Ascending aorta (tissue), 2 donors: ENCODE measurements at regions of chr5 and their contacts with region 1.

Region 1: DNA sequence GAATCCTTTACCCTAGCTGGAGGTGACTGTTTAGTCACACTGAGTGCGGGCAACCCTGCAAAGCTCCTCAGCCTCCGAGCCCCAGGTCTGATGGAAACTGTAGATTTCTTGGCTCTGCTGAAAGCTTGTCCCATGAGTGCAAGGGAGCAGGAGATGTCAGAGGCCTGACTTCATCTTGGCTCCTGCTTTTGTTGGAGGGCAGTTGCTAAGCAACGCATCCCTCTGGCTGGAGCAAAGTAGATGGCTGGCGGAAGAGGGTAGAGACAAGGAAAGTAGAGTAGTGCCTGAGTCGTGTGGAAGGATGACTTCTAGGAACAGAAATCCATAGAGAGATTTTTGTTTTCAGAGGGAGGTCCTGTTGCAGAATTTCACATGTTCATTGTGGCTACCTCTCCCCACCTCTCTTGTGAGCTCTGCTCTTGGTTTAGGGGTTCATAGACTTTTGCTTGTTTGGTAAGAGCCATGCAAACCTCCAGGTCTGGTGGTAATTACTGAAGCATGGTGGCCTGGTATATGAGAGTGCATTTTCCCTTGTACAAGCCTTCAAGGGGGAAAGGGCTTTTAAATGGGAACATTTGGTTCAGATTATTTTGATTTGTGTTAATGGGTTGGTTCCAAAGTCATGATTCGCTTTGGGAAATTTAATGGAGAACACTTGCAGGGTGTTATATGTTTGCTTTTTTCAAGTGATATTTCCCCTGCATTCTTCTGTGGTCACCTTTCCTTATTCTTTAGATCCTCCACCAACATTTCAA is 71.5 kb downstream of the ARHGAP26 start:
- DNase-seq: peak; percentile 70 to 94
- H3K4me3 ChIP-seq: no peak overlapping the region
- H3K27ac ChIP-seq: peak overlapping the region; percentile 69 to 81
- H3K4me1 ChIP-seq: peaks cover 39 to 66% of the 10 kb centered on the region in 2 donors
- H3K27me3 ChIP-seq: no peaks in the 10 kb centered on the region
- CTCF ChIP-seq: no peak

Region 2: GRCh38 chr5:142807372-142807911 is 34.2 kb before region 1 on chr5:
- intact Hi-C with region 1: no loop called
- DNase-seq: no peak
- H3K4me3 ChIP-seq: no peak overlapping the region
- H3K27ac ChIP-seq: no peak overlapping the region
- H3K4me1 ChIP-seq: peaks cover 5 to 16% of the 10 kb centered on the region in 2 donors
- H3K27me3 ChIP-seq: no peaks in the 10 kb centered on the region
- CTCF ChIP-seq: no peak

Region 3: GRCh38 chr5:142862594-142862993 is 20.9 kb after region 1 on chr5:
- intact Hi-C with region 1: loop called (anchors 2 kb)
- DNase-seq: no peak
- H3K4me3 ChIP-seq: no peak overlapping the region
- H3K27ac ChIP-seq: peak overlapping the region; percentile 39 to 40
- H3K4me1 ChIP-seq: peaks cover 0 to 16% of the 10 kb centered on the region in 2 donors
- H3K27me3 ChIP-seq: no peaks in the 10 kb centered on the region
- CTCF ChIP-seq: no peak